GM12878 (cell line): ENCODE measurements at regions of chr16 and their contacts with region 1.

Region 1: GRCh38 chr16:75622761-75623605 is at the start of gene ADAT1:
- DNase-seq: peak; percentile 82
- ATAC-seq: peak; percentile 97
- H3K4me3 ChIP-seq: peak within 1 kb of the TSS; percentile 93
- H3K27ac ChIP-seq: peak within 1 kb of the TSS; percentile 90
- H3K4me1 ChIP-seq: peaks cover 24% of the 10 kb centered on the region
- H3K27me3 ChIP-seq: no peaks in the 10 kb centered on the region
- CTCF ChIP-seq: no peak
- EP300 ChIP-seq: no peak
- POLR2A ChIP-seq: peak; percentile 95
- RAD21 ChIP-seq: no peak
- polyA plus RNA-seq, gene ADAT1: 26.2 to 29.5 TPM

Region 2: DNA sequence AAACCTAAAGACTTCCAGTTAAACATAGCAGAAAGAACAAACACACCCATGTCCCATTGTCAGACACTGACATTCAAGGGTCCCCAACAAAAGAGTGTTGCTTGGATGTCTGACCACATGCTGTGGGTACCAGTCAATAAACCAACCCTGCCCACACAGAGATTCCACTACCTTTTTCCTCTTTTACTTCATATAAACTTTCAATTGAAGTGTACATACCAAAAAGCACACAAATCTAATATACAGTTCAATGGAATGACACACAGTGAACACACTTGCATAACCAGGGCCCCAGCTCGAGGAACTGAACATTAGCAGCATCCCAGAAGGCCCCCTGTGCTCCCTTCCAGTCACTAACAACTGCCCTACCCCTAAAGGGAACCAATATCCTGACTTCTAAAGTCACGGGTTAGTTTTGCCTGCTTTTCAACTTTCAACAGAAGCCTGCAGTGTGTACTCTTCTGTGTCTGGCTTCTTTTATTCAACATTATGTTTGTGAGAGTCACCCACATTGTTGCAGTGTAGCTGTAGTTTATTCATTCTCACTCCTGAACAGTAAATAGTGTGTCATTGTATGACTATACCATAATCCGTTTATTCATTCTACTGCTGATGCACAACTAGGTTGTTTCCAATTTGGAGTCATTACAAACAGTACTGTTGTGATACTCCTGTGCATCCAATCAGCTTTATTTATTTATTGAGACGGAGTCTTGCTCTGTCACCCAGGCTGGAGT is 207.6 kb before region 1 on chr16:
- CTCF ChIA-PET with region 1: no interaction called
- POLR2A ChIA-PET with region 1: no interaction called
- RAD21 ChIA-PET with region 1: no interaction called
- SMC1A ChIA-PET with region 1: no interaction called
- in situ Hi-C with region 1: no loop called
- intact Hi-C with region 1: no loop called
- DNase-seq: no peak
- ATAC-seq: no peak
- H3K4me3 ChIP-seq: no peak overlapping the region
- H3K27ac ChIP-seq: no peak overlapping the region
- H3K4me1 ChIP-seq: no peaks in the 10 kb centered on the region
- H3K27me3 ChIP-seq: no peaks in the 10 kb centered on the region
- CTCF ChIP-seq: no peak
- EP300 ChIP-seq: no peak
- POLR2A ChIP-seq: no peak
- RAD21 ChIP-seq: no peak

Region 3: GRCh38 chr16:75471723-75472633 is 151.0 kb before region 1 on chr16:
- CTCF ChIA-PET with region 1: interaction called, 51 read pairs
- POLR2A ChIA-PET with region 1: interaction called, 4 read pairs
- RAD21 ChIA-PET with region 1: interaction called, 28 read pairs
- SMC1A ChIA-PET with region 1: interaction called, 26 read pairs
- in situ Hi-C with region 1: loop called (anchors 10 kb)
- intact Hi-C with region 1: no loop called
- DNase-seq: no peak
- ATAC-seq: peak; percentile 94
- H3K4me3 ChIP-seq: no peak overlapping the region
- H3K27ac ChIP-seq: no peak overlapping the region
- H3K4me1 ChIP-seq: no peaks in the 10 kb centered on the region
- H3K27me3 ChIP-seq: no peaks in the 10 kb centered on the region
- CTCF ChIP-seq: peak; percentile 74 to 85 (median 80)
- EP300 ChIP-seq: no peak
- POLR2A ChIP-seq: no peak
- RAD21 ChIP-seq: peak; percentile 86

Region 4: GRCh38 chr16:75550211-75550662 is 72.7 kb before region 1 on chr16:
- CTCF ChIA-PET with region 1: interaction called, 53 read pairs
- POLR2A ChIA-PET with region 1: interaction called, 3 read pairs
- RAD21 ChIA-PET with region 1: interaction called, 16 read pairs
- SMC1A ChIA-PET with region 1: interaction called, 17 read pairs
- in situ Hi-C with region 1: no loop called
- intact Hi-C with region 1: no loop called
- DNase-seq: peak; percentile 69
- ATAC-seq: peak; percentile 89
- H3K4me3 ChIP-seq: no peak overlapping the region
- H3K27ac ChIP-seq: no peak overlapping the region
- H3K4me1 ChIP-seq: peaks cover 8% of the 10 kb centered on the region
- H3K27me3 ChIP-seq: no peaks in the 10 kb centered on the region
- CTCF ChIP-seq: peak; percentile 70 to 78 (median 77)
- EP300 ChIP-seq: no peak
- POLR2A ChIP-seq: no peak
- RAD21 ChIP-seq: peak; percentile 85

Region 5: DNA sequence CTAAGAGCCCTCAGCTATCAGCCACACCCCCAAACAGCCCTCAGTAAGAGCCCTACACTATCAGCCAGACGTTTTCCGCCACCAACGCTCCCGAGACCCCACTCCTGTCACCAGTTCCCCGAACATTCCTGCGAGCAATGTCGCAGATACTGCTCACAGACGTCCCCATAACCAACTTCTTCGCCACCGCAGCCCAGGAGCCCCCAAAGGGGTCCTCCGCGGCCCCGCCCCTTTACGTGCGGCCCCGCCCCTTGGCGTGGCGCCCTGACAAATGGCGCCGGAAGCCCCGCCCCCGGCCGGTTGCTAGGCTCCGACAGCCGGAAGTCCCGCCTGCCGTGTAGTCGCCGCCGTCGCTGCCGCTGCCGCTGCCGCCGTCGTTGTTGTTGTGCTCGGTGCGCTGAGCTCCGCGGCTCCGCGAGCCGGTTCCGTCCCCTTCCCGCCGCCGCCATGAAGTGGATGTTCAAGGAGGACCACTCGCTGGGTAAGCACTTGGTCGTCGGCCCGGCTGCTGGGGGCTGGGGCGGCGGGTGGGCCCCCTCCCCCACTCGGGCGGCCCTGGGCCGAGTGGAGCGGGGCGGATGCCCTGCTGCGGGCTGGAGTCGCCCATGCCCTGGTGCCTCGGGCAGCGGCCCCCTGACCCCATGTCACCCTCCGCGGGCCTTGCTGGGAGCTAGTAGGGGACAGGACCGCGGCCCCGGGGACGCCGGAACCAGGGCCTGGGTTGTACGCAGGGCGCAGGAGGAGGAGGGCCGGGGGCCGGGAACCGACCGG is 56.8 kb before region 1 on chr16 and contains the start of gene GABARAPL2:
- CTCF ChIA-PET with region 1: interaction called, 43 read pairs
- POLR2A ChIA-PET with region 1: interaction called, 116 read pairs
- RAD21 ChIA-PET with region 1: interaction called, 44 read pairs
- SMC1A ChIA-PET with region 1: interaction called, 42 read pairs
- in situ Hi-C with region 1: no loop called
- intact Hi-C with region 1: loop called (anchors 2 kb)
- DNase-seq: no peak
- ATAC-seq: peak; percentile 82
- H3K4me3 ChIP-seq: peak within 1 kb of the TSS; percentile 84
- H3K27ac ChIP-seq: peak within 1 kb of the TSS; percentile 78
- H3K4me1 ChIP-seq: peaks cover 30% of the 10 kb centered on the region
- H3K27me3 ChIP-seq: no peaks in the 10 kb centered on the region
- CTCF ChIP-seq: no peak
- EP300 ChIP-seq: no peak
- POLR2A ChIP-seq: peak; percentile 85
- RAD21 ChIP-seq: no peak
- polyA plus RNA-seq, gene GABARAPL2: 358 to 359 TPM

Region 6: GRCh38 chr16:75647492-75648264 is 24.7 kb after region 1 on chr16 and contains the starts of genes KARS1 and TERF2IP:
- CTCF ChIA-PET with region 1: interaction called, 51 read pairs
- POLR2A ChIA-PET with region 1: interaction called, 67 read pairs
- RAD21 ChIA-PET with region 1: interaction called, 46 read pairs
- SMC1A ChIA-PET with region 1: interaction called, 69 read pairs
- in situ Hi-C with region 1: no loop called
- intact Hi-C with region 1: loop called (anchors 2 kb)
- DNase-seq: peak; percentile 85
- ATAC-seq: peak; percentile 91
- H3K4me3 ChIP-seq: peak within 1 kb of the TSS; percentile 85
- H3K27ac ChIP-seq: peak within 1 kb of the TSS; percentile 86
- H3K4me1 ChIP-seq: peaks cover 25% of the 10 kb centered on the region
- H3K27me3 ChIP-seq: no peaks in the 10 kb centered on the region; a peak in 1 of 4 replicates
- CTCF ChIP-seq: no peak
- EP300 ChIP-seq: no peak
- POLR2A ChIP-seq: peak; percentile 98
- RAD21 ChIP-seq: no peak
- polyA plus RNA-seq, gene KARS1: 187 to 207 TPM
- polyA plus RNA-seq, gene TERF2IP: 19.6 to 40.6 TPM

Region 7: DNA sequence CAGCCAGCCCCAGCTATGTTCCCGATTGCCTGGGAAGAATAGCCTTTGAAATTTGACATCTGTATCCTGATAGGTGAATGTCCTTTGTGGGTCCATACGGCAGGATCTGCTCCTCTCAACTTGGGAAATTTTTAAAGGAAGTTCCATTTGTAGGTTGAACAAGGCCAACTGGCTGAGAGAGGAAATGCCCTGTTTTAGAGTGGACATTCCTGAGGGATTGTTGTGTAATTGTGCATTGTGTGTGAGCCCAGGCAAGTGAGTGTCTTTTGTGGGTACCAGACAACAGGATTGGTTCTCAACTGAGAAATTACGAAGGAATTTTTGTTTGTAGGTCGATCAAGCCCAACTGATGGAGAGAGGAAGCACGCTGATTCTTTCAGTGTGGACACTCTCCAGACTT is 56.4 kb after region 1 on chr16:
- CTCF ChIA-PET with region 1: no interaction called
- POLR2A ChIA-PET with region 1: no interaction called
- RAD21 ChIA-PET with region 1: no interaction called
- SMC1A ChIA-PET with region 1: no interaction called
- in situ Hi-C with region 1: no loop called
- intact Hi-C with region 1: no loop called
- DNase-seq: no peak
- ATAC-seq: no peak
- H3K4me3 ChIP-seq: no peak overlapping the region
- H3K27ac ChIP-seq: no peak overlapping the region
- H3K4me1 ChIP-seq: no peaks in the 10 kb centered on the region
- H3K27me3 ChIP-seq: no peaks in the 10 kb centered on the region
- CTCF ChIP-seq: no peak
- EP300 ChIP-seq: no peak
- POLR2A ChIP-seq: no peak
- RAD21 ChIP-seq: no peak

Region 8: GRCh38 chr16:75718452-75718851 is 95.5 kb after region 1 on chr16:
- CTCF ChIA-PET with region 1: no interaction called
- POLR2A ChIA-PET with region 1: no interaction called
- RAD21 ChIA-PET with region 1: no interaction called
- SMC1A ChIA-PET with region 1: no interaction called
- in situ Hi-C with region 1: no loop called
- intact Hi-C with region 1: no loop called
- DNase-seq: no peak
- ATAC-seq: no peak
- H3K4me3 ChIP-seq: no peak overlapping the region
- H3K27ac ChIP-seq: no peak overlapping the region
- H3K4me1 ChIP-seq: no peaks in the 10 kb centered on the region
- H3K27me3 ChIP-seq: no peaks in the 10 kb centered on the region
- CTCF ChIP-seq: no peak
- EP300 ChIP-seq: no peak
- POLR2A ChIP-seq: no peak
- RAD21 ChIP-seq: no peak